Heart left ventricle (tissue), 16 donors: ENCODE measurements at regions of chr20 and their contacts with region 1.

Region 1: GRCh38 chr20:19995220-19995863 is 21.8 kb upstream of the NAA20 start:
- DNase-seq: no peak
- ATAC-seq: peak in 3 of 4 donors; percentile 15 to 37 (median 26)
- H3K4me3 ChIP-seq: no peak overlapping the region
- H3K27ac ChIP-seq: peak overlapping the region in 9 of 12 donors; percentile 64 to 84 (median 73)
- H3K4me1 ChIP-seq: peaks cover 27 to 97% (median 79%) of the 10 kb centered on the region in 12 donors
- H3K27me3 ChIP-seq: no peaks in the 10 kb centered on the region
- CTCF ChIP-seq: peak; percentile 68 to 86 (median 79)
- POLR2A ChIP-seq: no peak

Region 2: DNA sequence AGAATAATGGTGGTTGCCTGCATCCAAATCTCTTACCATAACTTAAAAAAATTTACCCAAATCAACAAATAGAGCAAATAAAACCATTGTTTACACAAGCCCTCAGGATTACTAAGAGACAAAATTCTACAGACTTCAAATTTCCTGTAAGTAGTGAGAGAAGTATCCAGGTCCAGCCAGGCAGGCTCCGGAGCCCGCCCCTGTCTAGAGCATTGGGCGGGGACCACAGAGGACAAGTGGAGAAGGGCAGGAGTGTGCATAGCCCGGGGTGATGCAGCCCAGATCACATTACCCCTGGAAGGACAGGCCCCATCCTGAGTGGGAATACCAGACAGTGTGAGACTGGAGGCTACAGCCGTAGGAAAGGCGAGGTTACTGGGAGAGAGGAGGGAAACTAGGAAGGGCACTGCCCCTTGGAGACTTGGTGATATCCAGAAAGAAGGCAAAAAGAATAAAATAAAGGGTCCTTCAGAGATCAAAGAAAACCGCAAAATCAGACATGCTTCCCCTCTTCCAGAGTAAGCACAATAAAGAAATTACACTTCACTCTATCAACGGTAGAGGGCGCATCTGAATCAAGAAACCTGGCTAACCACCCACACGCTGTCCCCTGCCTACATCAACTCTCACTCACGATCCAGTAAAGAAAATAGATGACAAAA is 210.7 kb before region 1 on chr20:
- intact Hi-C with region 1: loop called (anchors 1 to 5 kb)
- DNase-seq: peak in 4 of 5 donors; percentile 64 to 78 (median 73)
- ATAC-seq: peak; percentile 67 to 79 (median 72)
- H3K4me3 ChIP-seq: peak overlapping the region in 2 of 12 donors; percentile 5 to 6
- H3K27ac ChIP-seq: peak overlapping the region; percentile 69 to 91 (median 84)
- H3K4me1 ChIP-seq: peaks cover 12 to 68% (median 46%) of the 10 kb centered on the region in 12 donors
- H3K27me3 ChIP-seq: no peaks in the 10 kb centered on the region
- CTCF ChIP-seq: peak; percentile 65 to 87 (median 81)
- POLR2A ChIP-seq: no peak

Region 3: GRCh38 chr20:19903168-19903811 is 92.1 kb before region 1 on chr20:
- intact Hi-C with region 1: loop called in 4 of 10 experiments (anchors 5 to 10 kb)
- DNase-seq: peak in 3 of 5 donors; percentile 38 to 54 (median 43)
- ATAC-seq: peak in 3 of 4 donors; percentile 26 to 57 (median 32)
- H3K4me3 ChIP-seq: no peak overlapping the region
- H3K27ac ChIP-seq: peak overlapping the region in 5 of 12 donors; percentile 7 to 76 (median 35)
- H3K4me1 ChIP-seq: peaks cover 0 to 57% (median 41%) of the 10 kb centered on the region in 12 donors
- H3K27me3 ChIP-seq: no peaks in the 10 kb centered on the region
- CTCF ChIP-seq: peak in 7 of 12 donors; percentile 14 to 48 (median 29)
- POLR2A ChIP-seq: no peak

Region 4: DNA sequence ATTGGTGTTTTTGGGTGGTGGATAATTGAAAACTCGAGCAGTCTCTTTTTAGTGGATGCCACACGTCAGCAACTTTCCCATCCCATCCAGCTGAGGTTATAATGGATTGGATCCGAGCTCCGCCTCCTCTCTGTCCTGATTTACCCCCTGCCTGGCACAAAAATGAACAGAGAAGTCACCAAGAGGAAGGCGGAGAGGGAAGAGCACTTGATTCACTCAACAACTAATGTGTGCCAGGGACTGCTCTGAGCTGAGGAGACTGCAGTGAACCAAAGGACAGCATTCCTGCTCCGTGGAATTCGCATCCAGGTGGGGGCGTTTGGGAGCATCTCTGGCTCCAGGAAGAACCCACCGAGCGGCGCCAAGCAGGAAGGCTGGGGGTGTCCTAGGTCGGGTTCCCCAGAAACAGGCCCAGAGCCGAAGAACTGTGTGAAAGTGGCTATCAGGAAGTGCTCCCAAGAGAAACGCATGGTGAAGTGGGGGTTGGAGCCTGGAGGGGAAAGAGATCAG is 74.0 kb before region 1 on chr20:
- intact Hi-C with region 1: loop called in 1 of 10 experiments (anchors 5 kb)
- DNase-seq: peak in 4 of 5 donors; percentile 57 to 75 (median 62)
- ATAC-seq: peak; percentile 79 to 91 (median 88)
- H3K4me3 ChIP-seq: peak overlapping the region in 2 of 12 donors; percentile 13 to 43
- H3K27ac ChIP-seq: peak overlapping the region in 11 of 12 donors; percentile 11 to 88 (median 56)
- H3K4me1 ChIP-seq: peaks cover 7 to 77% (median 65%) of the 10 kb centered on the region in 12 donors
- H3K27me3 ChIP-seq: no peaks in the 10 kb centered on the region
- CTCF ChIP-seq: no peak
- POLR2A ChIP-seq: no peak

Region 5: GRCh38 chr20:19974626-19975435 is 20.5 kb before region 1 on chr20:
- intact Hi-C with region 1: loop called in 2 of 10 experiments (anchors 2 kb)
- DNase-seq: peak; percentile 90 to 92 (median 91)
- ATAC-seq: peak; percentile 70 to 91 (median 82)
- H3K4me3 ChIP-seq: peak overlapping the region; percentile 42 to 79 (median 64)
- H3K27ac ChIP-seq: peak overlapping the region; percentile 90 to 96 (median 94)
- H3K4me1 ChIP-seq: peaks cover 12 to 100% (median 65%) of the 10 kb centered on the region in 12 donors
- H3K27me3 ChIP-seq: no peaks in the 10 kb centered on the region
- CTCF ChIP-seq: peak in 2 of 12 donors; percentile 9
- POLR2A ChIP-seq: peak in 1 of 2 donors; percentile 51